Astrocyte of the cerebellum (primary cell): ENCODE measurements at regions of chr5 and their contacts with region 1.

Region 1: DNA sequence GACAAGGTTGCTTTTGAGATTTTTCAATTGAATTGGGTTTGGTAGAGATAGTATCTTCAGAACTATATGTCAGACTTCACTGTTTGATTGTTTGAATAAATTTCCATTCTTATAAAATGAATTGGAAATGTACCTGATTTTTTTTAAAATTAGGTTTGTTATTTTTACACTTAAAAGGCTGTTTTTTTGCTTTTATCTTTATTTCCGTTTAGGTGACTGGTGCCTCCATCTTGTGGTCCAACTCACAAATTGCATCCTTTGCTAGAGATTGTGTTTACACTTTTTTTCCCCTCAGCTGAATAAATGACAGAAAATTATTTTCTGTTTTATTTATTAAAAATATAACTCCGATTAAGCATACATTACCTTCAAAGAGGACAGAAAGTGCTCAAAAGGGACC is 15.6 kb downstream of the NDUFAF2 start:
- DNase-seq: peak; percentile 16
- H3K4me3 ChIP-seq: no peak overlapping the region
- CTCF ChIP-seq: peak; percentile 71

Region 2: DNA sequence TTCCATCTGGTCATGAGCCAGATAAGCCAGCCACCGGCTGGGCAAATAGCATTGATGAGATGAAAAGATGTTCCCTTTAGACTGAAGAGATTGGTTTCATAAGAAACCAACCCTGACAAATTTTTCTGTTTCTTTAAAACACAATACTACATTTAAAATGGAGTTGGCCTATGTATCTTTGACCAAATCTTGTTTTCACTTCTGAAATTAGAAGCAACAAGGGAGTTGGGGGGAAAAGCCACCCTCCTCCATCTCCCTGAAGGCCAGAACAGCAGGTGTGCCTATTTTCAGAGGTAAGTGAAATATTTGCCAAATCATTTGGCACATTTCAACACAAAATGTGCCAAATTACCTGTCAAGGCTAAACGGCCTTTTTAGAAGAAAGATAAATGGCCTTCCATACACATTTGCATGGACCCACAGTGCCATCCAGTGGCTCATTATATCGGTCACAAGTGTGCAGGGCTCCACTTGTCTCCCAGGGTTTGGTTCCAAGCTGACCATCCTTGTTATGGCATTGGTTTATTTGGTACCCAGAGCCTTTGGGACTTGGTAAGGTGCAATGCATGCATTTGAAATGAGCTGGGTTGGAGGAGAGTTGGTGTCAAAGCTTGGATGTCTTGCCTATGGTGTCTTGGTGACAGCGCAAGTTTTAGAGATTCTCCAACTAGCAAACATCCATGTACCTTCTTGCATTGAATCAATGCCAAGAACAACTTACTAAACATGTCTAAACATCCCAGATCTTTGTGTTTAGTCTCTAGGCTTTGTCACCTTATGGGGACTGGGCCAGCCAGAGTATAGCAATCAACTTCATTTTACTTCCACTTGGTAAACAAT is 973.4 kb after region 1 on chr5:
- in situ Hi-C with region 1: loop called (anchors 25 kb)
- DNase-seq: peak; percentile 50
- H3K4me3 ChIP-seq: no peak overlapping the region
- CTCF ChIP-seq: peak; percentile 71